Activated CD4-positive, alpha-beta T cell treated with anti-CD3 and anti-CD28 coated beads, Interleukin-2, amount 10 ng/mL, durations not matched to agents 24 days and 14 days (primary cell): ENCODE measurements at regions of chr3 and their contacts with region 1.

Region 1: DNA sequence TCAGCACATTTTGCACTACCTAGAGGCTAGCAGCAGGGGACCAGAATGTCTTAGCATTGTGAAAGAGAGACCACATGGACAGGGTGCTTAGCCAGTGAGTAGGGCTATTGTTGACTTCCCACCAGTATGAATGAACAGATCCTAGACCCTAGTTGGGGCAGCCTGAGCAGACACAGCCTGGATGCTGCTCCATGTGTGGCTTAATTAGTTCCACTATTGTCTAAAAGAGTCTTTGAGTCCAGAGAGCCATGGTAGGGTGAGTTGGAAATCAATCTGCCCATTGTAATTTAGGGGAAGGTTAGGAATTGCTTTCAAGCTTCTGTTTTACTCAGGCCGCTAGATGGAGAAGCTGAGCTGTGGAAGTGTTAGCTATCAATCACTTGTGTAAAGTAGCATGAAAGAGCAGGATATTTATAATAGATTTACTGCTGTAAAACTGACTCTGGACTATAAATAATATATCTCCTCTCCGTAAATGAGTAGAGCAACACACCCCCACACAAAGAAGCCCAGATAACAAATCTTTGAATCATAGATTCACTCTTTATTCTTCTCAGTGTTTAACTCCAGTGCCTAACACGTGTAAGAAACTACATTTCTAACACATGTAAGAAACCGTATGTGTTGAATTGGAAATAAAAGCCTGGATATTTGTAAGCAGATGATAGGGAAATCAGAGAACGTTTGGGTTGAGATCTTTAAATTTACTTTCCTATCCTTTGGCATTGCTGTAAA is 4.1 kb upstream of the GCSAM start:
- DNase-seq: peak; percentile 83
- H3K4me3 Mint-ChIP-seq: no peak overlapping the region
- H3K27ac Mint-ChIP-seq: no peak overlapping the region
- H3K4me1 Mint-ChIP-seq: peaks cover 46% of the 10 kb centered on the region
- H3K27me3 Mint-ChIP-seq: no peaks in the 10 kb centered on the region

Region 2: GRCh38 chr3:112086076-112086854 is 50.9 kb before region 1 on chr3 and contains the start of gene C3orf52:
- intact Hi-C with region 1: loop called (anchors 2 kb)
- DNase-seq: peak; percentile 94
- H3K4me3 Mint-ChIP-seq: peak within 1 kb of the TSS; percentile 93
- H3K27ac Mint-ChIP-seq: peak within 1 kb of the TSS; percentile 87
- H3K4me1 Mint-ChIP-seq: peaks cover 48% of the 10 kb centered on the region
- H3K27me3 Mint-ChIP-seq: no peaks in the 10 kb centered on the region
- total RNA-seq, gene C3orf52: 13.0 and 14.2 TPM in 2 replicates

Region 3: DNA sequence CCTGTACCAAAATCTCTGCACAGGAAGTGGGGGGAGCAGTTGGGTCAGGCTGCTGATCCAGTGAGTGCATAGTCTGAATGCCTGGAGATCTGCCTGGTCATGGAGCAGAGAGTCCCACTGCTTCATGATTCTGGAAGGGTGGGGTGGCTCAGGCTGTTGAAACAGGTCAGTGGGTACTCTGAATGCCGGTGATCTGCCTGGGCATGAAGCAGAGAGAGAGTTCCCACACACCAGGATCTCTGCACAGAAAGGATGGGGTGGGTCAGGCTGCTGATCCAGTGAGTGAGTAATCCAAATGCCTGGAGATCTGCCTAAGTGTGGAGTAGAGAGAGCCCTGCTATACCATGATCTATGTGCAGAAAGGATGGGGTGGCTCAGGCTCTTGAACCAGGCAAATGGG is 12.0 kb after region 1 on chr3:
- intact Hi-C with region 1: no loop called
- DNase-seq: no peak
- H3K4me3 Mint-ChIP-seq: no peak overlapping the region
- H3K27ac Mint-ChIP-seq: no peak overlapping the region
- H3K4me1 Mint-ChIP-seq: no peaks in the 10 kb centered on the region
- H3K27me3 Mint-ChIP-seq: peaks cover 3% of the 10 kb centered on the region

Region 4: GRCh38 chr3:112293368-112294321 is 156.5 kb after region 1 on chr3 and contains the start of gene SLC9C1:
- intact Hi-C with region 1: loop called (anchors 2 kb)
- DNase-seq: peak; percentile 87
- H3K4me3 Mint-ChIP-seq: peak within 1 kb of the TSS; percentile 76
- H3K27ac Mint-ChIP-seq: peak within 1 kb of the TSS; percentile 60
- H3K4me1 Mint-ChIP-seq: peaks cover 26% of the 10 kb centered on the region
- H3K27me3 Mint-ChIP-seq: no peaks in the 10 kb centered on the region
- total RNA-seq, gene SLC9C1: not detected in 2 replicates

Region 5: GRCh38 chr3:112464264-112464663 is 327.1 kb after region 1 on chr3:
- intact Hi-C with region 1: loop called (anchors 5 kb)
- DNase-seq: no peak
- H3K4me3 Mint-ChIP-seq: peak overlapping the region; percentile 58
- H3K27ac Mint-ChIP-seq: peak overlapping the region; percentile 23
- H3K4me1 Mint-ChIP-seq: peaks cover 73% of the 10 kb centered on the region
- H3K27me3 Mint-ChIP-seq: no peaks in the 10 kb centered on the region

Region 6: DNA sequence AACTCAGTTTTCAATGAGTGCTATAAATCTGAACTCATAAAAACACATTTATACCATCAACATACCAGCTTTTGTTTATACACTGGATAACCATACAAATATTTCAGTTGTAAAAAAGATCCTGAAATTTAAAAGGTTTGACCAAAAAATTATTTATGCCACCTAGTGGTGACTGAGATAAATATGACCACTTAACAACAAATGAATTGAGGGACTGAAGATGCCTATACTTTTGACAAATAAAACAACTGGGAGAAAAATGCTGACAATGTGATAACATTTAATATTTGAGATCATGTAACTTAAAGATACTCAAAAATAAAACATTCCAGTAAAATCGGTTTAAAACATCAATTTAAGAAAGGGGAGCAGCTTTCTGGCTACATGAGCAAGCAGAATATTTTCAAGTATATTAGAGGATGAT is 394.2 kb after region 1 on chr3:
- intact Hi-C with region 1: loop called (anchors 5 kb)
- DNase-seq: no peak
- H3K4me3 Mint-ChIP-seq: no peak overlapping the region
- H3K27ac Mint-ChIP-seq: no peak overlapping the region
- H3K4me1 Mint-ChIP-seq: peaks cover 1% of the 10 kb centered on the region
- H3K27me3 Mint-ChIP-seq: no peaks in the 10 kb centered on the region

Region 7: DNA sequence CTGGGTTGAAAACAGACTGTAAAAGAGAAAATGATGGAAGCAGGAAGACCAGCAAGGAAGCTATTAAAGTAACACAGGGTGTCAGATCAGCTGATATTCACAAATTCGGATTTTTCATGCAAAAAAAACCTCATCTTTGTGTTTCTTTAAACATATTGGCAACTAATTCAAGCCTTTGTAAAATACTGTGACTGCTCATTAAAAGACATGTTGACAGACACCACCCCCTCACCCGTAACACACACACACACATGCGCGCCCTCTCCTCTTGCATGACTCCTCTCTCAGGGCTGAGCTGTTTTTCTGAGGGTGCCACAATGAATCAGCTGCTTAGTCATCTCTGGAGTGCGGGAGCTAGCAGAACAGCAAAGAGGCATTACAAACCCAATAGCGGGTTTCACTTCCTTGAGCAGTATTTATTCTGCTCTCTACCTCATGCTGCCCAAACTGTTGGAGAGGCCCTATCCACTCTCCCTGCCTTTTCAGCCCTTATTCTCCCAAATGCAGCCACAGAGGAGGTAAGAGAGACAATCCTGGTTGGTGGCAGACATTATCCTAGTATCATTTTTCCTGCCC is 539.6 kb after region 1 on chr3:
- intact Hi-C with region 1: loop called (anchors 10 kb)
- DNase-seq: peak; percentile 96
- H3K4me3 Mint-ChIP-seq: peak overlapping the region; percentile 60
- H3K27ac Mint-ChIP-seq: peak overlapping the region; percentile 90
- H3K4me1 Mint-ChIP-seq: peaks cover 62% of the 10 kb centered on the region
- H3K27me3 Mint-ChIP-seq: peaks cover 2% of the 10 kb centered on the region